A673 (cell line): ENCODE measurements at regions of chr10 and their contacts with region 1.

Region 1: GRCh38 chr10:21516242-21517131 is 9.0 kb downstream of the SKIDA1 start:
- DNase-seq: peak; percentile 75
- H3K4me3 ChIP-seq: peak overlapping the region; percentile 59
- H3K27ac ChIP-seq: peak overlapping the region; percentile 33
- H3K4me1 ChIP-seq: peaks cover 46% of the 10 kb centered on the region
- H3K27me3 ChIP-seq: no peaks in the 10 kb centered on the region
- CTCF ChIP-seq: no peak

Region 2: GRCh38 chr10:21724695-21725367 is 208.3 kb after region 1 on chr10:
- CTCF ChIA-PET with region 1: interaction called, 4 read pairs
- POLR2A ChIA-PET with region 1: interaction called, 18 read pairs
- intact Hi-C with region 1: loop called (anchors 5 kb)
- DNase-seq: peak; percentile 99
- H3K4me3 ChIP-seq: peak overlapping the region; percentile 17
- H3K27ac ChIP-seq: peak overlapping the region; percentile 64
- H3K4me1 ChIP-seq: peaks cover 88% of the 10 kb centered on the region
- H3K27me3 ChIP-seq: no peaks in the 10 kb centered on the region
- CTCF ChIP-seq: no peak

Region 3: DNA sequence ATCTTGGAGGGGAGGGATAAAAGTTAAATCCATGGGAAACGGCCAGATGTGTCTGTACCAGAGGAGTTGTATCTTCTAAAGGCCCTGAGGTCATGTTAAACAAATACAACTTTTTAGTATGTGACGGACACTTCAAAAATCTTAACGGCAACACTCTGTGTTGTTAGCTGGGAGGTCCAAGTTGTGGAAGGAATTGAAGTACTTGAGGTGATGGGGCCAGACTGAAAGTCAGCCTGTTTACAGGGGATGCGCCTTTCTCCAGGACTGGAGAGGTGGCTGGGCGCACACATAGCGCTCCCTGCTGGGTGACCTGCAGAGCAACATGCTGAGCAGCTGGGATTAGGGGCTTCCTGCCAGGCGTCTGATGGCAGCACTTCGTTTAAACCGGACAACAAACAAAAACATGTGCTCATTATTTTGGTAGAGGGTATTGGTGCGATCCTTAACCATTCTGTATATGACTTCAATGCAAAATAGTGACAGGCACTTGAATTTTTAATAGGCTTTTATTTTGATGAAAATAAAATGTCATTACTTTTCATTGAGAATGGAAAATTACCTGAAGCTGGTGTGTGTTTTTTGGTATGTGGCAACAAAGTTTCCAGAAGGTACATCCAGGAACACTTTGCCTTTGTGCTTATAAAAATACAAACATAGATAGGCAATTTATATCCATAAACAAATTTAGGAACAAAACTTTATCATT is 215.7 kb after region 1 on chr10:
- CTCF ChIA-PET with region 1: interaction called, 4 read pairs
- POLR2A ChIA-PET with region 1: no interaction called
- intact Hi-C with region 1: loop called (anchors 5 kb)
- DNase-seq: peak; percentile 88
- H3K4me3 ChIP-seq: no peak overlapping the region
- H3K27ac ChIP-seq: no peak overlapping the region
- H3K4me1 ChIP-seq: peaks cover 73% of the 10 kb centered on the region
- H3K27me3 ChIP-seq: no peaks in the 10 kb centered on the region
- CTCF ChIP-seq: peak; percentile 94

Region 4: GRCh38 chr10:21807180-21807579 is 290.7 kb after region 1 on chr10:
- CTCF ChIA-PET with region 1: no interaction called
- POLR2A ChIA-PET with region 1: interaction called, 10 read pairs
- intact Hi-C with region 1: no loop called
- DNase-seq: peak; percentile 51
- H3K4me3 ChIP-seq: no peak overlapping the region
- H3K27ac ChIP-seq: no peak overlapping the region
- H3K4me1 ChIP-seq: peaks cover 8% of the 10 kb centered on the region
- H3K27me3 ChIP-seq: no peaks in the 10 kb centered on the region
- CTCF ChIP-seq: no peak